Mucosa of descending colon (tissue), 3 donors: ENCODE measurements at regions of chr7 and their contacts with region 1.

Region 1: DNA sequence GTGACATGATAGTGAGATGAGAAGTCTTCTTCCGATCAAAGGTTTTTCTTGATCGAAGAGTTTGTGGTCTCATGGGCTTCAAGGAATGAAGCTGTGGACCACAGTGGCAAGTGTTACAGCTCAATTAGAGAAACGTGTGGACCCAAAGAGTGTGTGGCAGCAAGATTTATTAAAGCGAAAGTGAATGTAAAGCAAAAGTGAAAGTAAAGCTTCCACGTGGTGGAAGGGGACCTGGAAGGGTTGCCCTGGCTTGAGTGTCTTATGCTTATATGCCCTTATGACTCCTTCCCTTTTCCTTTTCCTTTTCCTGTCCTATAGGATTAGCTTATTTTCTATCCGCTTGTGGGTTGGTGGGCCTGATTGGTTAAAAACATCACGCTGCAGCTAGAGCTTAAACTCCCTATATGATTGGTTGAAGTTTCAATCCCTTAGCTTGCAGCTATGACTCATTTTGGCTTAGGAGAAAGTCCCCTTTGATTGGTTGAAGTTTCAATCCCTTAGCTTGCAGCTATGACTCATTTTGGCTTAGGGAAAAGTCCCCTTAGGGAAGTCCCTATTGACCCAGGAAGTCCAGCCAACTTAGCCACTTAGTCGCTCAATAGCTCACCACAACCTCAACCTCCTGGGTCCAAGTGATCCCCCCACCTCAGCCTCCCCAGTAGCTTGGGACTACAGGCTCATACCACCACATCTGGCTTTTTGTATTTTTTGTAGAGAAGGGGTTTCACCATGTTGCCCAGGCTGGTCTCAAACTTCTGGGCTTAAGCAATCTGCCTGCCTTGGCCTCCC is 34.7 kb downstream of the MRPS24 start:
- DNase-seq: peak in 1 of 3 donors; percentile 18
- ATAC-seq: peak; percentile 60
- H3K4me3 ChIP-seq: no peak overlapping the region
- H3K4me1 ChIP-seq: no peaks in the 10 kb centered on the region
- CTCF ChIP-seq: no peak

Region 2: GRCh38 chr7:43729214-43729923 is 105.3 kb before region 1 on chr7 and contains the start of gene COA1:
- intact Hi-C with region 1: loop called (anchors 10 kb)
- DNase-seq: peak; percentile 88 to 91 (median 89)
- ATAC-seq: peak; percentile 100
- H3K4me3 ChIP-seq: peak within 1 kb of the TSS; percentile 64
- H3K4me1 ChIP-seq: no peaks in the 10 kb centered on the region
- CTCF ChIP-seq: no peak
- total RNA-seq, gene COA1: 35.1 to 42.1 (median 38.8) TPM

Region 3: DNA sequence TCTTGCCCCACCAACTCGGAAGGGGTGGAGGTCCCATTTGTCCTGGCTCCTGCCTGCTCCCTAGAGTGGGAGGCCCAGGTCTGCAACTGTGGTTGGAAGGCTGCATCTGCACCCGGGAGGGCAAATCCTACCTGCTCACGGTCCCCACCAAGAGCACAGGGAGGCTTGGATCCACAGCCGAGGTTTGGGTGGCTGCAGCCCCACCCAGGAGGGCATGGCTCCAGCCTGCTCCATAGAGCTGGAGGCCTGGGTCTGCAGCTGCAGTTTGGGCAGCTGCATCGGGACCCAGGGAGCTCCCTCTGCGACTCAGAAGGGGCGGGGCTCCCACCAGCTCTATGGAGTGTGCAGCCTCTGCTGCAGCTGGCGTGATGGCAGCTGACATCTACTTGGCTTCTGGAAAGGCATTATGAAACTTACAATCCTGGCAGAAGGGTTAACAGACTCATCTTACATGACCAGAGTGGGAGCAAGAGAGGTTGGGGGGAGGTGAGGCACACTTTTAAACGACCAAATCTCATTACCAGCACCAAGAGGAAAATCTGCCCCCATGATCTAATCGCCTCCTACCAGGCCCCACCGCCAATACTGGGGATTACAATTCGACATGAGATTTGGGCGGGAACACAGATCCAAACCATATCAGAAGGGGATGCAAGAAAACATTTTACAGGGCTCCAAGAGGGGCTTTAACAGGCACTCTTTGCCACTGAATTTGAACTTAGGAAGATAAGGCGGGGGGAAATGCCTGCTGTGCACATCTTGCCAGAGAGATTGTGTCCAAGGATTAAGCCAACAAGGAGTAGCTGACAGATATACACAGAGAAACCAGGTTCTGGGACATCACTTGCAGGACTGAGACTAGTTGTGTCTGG is 84.4 kb before region 1 on chr7:
- intact Hi-C with region 1: no loop called
- DNase-seq: no peak
- ATAC-seq: no peak
- H3K4me3 ChIP-seq: no peak overlapping the region
- H3K4me1 ChIP-seq: no peaks in the 10 kb centered on the region
- CTCF ChIP-seq: no peak